ENCODE measurements at regions of chr12 and their contacts with region 1.

Region 1: DNA sequence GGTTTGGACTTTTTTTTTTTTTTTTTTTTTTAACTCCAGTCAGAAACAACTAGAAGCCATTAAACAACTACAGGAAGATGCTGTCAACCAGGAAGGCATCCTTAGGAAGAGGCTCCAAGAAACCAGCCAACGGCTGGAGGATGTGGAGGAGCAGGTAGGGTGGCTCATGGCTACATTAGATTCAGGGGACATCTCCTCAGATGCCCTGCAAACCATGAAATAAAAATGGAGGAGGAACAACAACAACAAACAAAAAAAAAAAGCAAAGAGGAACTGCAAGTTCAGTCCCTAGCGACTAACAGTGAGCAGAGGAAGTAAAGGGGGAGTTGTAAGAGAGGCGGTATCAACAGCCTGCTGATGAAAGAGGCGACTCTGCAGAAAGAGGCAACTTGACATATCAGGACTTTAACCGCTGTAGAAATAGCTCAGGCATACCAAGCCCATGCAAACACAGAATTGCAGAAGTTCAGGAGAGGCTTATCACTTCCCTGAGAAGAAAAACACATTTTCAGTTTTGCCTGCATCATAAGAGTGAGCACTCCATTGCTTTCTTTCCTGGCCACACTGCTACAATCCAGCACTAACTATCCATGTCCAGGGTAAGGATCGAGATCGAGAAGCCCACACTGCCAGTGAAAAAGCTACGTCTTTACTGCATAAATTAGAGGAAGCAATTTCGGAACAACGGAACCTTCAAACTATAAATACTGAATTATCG is 103.5 kb upstream of the BCAT1 start:
- DNase-seq: peak; percentile 82 to 91 (median 88)
- H3K4me3 ChIP-seq: peak overlapping the region; percentile 72 to 88
- H3K4me3 Mint-ChIP-seq: peak overlapping the region; percentile 93 to 100 (median 96)
- H3K27ac ChIP-seq: peak overlapping the region; percentile 52
- H3K27ac Mint-ChIP-seq: peak overlapping the region; percentile 97 to 99 (median 98)
- H3K4me1 ChIP-seq: peaks cover 51% of the 10 kb centered on the region
- H3K4me1 Mint-ChIP-seq: peaks cover 33 to 56% (median 44%) of the 10 kb centered on the region in 4 donors
- H3K27me3 ChIP-seq: no peaks in the 10 kb centered on the region
- H3K27me3 Mint-ChIP-seq: no peaks in the 10 kb centered on the region

Region 2: GRCh38 chr12:24948757-24949722 is 103.3 kb before region 1 on chr12 and contains the start of gene BCAT1:
- CTCF ChIA-PET with region 1: no interaction called
- POLR2A ChIA-PET with region 1: no interaction called
- intact Hi-C with region 1: no loop called
- DNase-seq: peak in 2 of 5 donors; percentile 2 to 11
- H3K4me3 ChIP-seq: peak within 1 kb of the TSS; percentile 55 to 64
- H3K4me3 Mint-ChIP-seq: peak within 1 kb of the TSS; percentile 82 to 92 (median 86)
- H3K27ac ChIP-seq: no peak within 1 kb of the TSS
- H3K27ac Mint-ChIP-seq: peak within 1 kb of the TSS in 3 of 7 donors; percentile 11 to 62 (median 21)
- H3K4me1 ChIP-seq: peaks cover 18% of the 10 kb centered on the region
- H3K4me1 Mint-ChIP-seq: peaks cover 19 to 25% (median 23%) of the 10 kb centered on the region in 4 donors
- H3K27me3 ChIP-seq: peaks cover 5% of the 10 kb centered on the region
- H3K27me3 Mint-ChIP-seq: peaks cover 27 to 42% of the 10 kb centered on the region in 2 donors
- total RNA-seq, gene BCAT1: 1.3 to 2.5 TPM

Region 3: GRCh38 chr12:24997970-24998582 is 54.3 kb before region 1 on chr12:
- CTCF ChIA-PET with region 1: interaction called, 21 read pairs
- POLR2A ChIA-PET with region 1: interaction called, 14 read pairs
- intact Hi-C with region 1: loop called (anchors 2 kb)
- DNase-seq: peak in 1 of 5 donors; percentile 2
- H3K4me3 ChIP-seq: no peak overlapping the region
- H3K4me3 Mint-ChIP-seq: peak overlapping the region in 1 of 8 donors; percentile 6
- H3K27ac ChIP-seq: no peak overlapping the region
- H3K27ac Mint-ChIP-seq: peak overlapping the region in 1 of 7 donors; percentile 52
- H3K4me1 ChIP-seq: peaks cover 12% of the 10 kb centered on the region
- H3K4me1 Mint-ChIP-seq: peaks cover 8 to 14% (median 10%) of the 10 kb centered on the region in 4 donors
- H3K27me3 ChIP-seq: no peaks in the 10 kb centered on the region
- H3K27me3 Mint-ChIP-seq: no peaks in the 10 kb centered on the region

Region 4: DNA sequence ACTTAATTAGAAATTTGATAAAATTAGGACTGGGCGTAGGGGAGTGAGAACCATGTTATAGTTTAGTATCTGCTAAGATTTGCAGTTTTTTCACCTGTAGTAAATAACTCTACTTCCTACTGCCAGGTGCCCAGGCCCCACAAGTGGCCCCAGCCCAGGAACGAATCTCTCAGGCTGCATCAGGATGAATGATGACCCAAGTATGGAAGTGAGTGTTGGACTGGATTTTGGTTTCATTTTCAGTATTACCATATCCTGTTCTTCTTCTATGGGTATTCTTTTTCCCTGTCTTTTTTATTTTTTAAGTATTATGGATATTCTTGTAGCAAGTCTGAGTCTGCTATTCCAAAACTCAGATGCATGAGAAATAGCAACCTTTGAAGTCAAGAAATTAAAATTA is 16.9 kb after region 1 on chr12:
- CTCF ChIA-PET with region 1: interaction called, 3 read pairs
- POLR2A ChIA-PET with region 1: interaction called, 6 read pairs
- intact Hi-C with region 1: loop called (anchors 2 kb)
- DNase-seq: no peak
- H3K4me3 ChIP-seq: no peak overlapping the region
- H3K4me3 Mint-ChIP-seq: peak overlapping the region in 1 of 8 donors; percentile 7
- H3K27ac ChIP-seq: no peak overlapping the region
- H3K27ac Mint-ChIP-seq: peak overlapping the region in 3 of 7 donors; percentile 27 to 55 (median 41)
- H3K4me1 ChIP-seq: peaks cover 5% of the 10 kb centered on the region
- H3K4me1 Mint-ChIP-seq: peaks cover 14 to 39% (median 18%) of the 10 kb centered on the region in 4 donors
- H3K27me3 ChIP-seq: no peaks in the 10 kb centered on the region
- H3K27me3 Mint-ChIP-seq: no peaks in the 10 kb centered on the region

Region 5: GRCh38 chr12:25130741-25131188 is 78.4 kb after region 1 on chr12:
- CTCF ChIA-PET with region 1: interaction called, 6 read pairs
- POLR2A ChIA-PET with region 1: no interaction called
- intact Hi-C with region 1: loop called (anchors 1 kb)
- DNase-seq: peak in 4 of 5 donors; percentile 33 to 53 (median 46)
- H3K4me3 ChIP-seq: no peak overlapping the region
- H3K4me3 Mint-ChIP-seq: no peak overlapping the region
- H3K27ac ChIP-seq: no peak overlapping the region
- H3K27ac Mint-ChIP-seq: no peak overlapping the region
- H3K4me1 ChIP-seq: no peaks in the 10 kb centered on the region
- H3K4me1 Mint-ChIP-seq: no peaks in the 10 kb centered on the region
- H3K27me3 ChIP-seq: no peaks in the 10 kb centered on the region
- H3K27me3 Mint-ChIP-seq: peaks cover 2 to 3% of the 10 kb centered on the region in 2 donors

Region 6: DNA sequence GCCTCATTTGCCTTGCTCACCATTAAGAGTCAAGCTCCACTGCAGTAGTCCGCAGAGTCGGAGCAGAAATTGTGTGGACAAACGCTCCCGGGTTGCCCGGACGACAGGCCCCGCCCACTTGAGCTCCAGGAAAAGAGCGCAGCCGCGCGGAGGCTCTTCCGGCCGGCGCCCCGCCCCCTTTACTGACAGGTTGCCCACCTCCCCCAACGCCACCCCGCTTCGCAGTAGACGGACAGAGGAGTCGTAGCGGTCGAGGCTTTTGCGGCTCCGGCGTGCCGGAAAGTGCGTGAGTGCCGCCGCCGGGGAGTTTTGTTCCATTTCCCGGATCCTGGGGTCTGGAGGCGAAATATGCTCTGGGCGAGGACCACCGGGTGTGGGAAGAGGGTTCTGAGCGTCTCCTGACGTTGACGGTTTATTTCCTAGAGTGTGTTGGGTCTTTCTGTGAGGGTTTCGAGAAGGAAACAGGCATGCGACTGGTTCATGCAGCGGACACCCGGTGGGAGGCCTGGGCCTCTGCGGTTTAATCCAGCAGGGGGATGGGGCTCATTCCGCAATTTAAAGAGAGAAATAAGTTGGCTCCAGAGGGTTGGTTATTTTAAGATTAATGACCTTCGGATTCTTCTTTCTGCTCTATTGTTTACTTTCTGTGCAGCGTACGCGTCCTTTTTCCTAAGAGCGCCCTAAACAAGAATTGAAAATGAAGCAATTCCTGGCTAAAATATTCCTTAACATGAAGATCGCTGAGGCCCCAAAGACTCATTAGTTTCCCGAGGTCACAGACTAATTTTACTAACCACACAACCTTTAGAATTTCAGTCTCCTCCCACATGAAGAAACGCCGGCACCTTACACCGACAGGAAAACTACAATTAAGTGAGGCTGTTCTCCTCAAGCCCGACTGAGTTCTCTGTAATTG is 143.0 kb after region 1 on chr12 and contains the starts of genes DNAI7 and ETFRF1:
- CTCF ChIA-PET with region 1: no interaction called
- POLR2A ChIA-PET with region 1: interaction called, 9 read pairs
- intact Hi-C with region 1: loop called (anchors 1 kb)
- DNase-seq: peak; percentile 93 to 97 (median 95)
- H3K4me3 ChIP-seq: peak within 1 kb of the TSS; percentile 73 to 98
- H3K4me3 Mint-ChIP-seq: peak within 1 kb of the TSS; percentile 96 to 99 (median 99)
- H3K27ac ChIP-seq: peak within 1 kb of the TSS; percentile 83
- H3K27ac Mint-ChIP-seq: peak within 1 kb of the TSS; percentile 97 to 100 (median 99)
- H3K4me1 ChIP-seq: peaks cover 24% of the 10 kb centered on the region
- H3K4me1 Mint-ChIP-seq: peaks cover 16 to 35% (median 25%) of the 10 kb centered on the region in 4 donors
- H3K27me3 ChIP-seq: no peaks in the 10 kb centered on the region
- H3K27me3 Mint-ChIP-seq: no peaks in the 10 kb centered on the region
- total RNA-seq, gene DNAI7: 0.15 TPM in 1 of 2 experiments, not detected in the other
- total RNA-seq, gene ETFRF1: 22.1 to 23.0 TPM

Region 7: DNA sequence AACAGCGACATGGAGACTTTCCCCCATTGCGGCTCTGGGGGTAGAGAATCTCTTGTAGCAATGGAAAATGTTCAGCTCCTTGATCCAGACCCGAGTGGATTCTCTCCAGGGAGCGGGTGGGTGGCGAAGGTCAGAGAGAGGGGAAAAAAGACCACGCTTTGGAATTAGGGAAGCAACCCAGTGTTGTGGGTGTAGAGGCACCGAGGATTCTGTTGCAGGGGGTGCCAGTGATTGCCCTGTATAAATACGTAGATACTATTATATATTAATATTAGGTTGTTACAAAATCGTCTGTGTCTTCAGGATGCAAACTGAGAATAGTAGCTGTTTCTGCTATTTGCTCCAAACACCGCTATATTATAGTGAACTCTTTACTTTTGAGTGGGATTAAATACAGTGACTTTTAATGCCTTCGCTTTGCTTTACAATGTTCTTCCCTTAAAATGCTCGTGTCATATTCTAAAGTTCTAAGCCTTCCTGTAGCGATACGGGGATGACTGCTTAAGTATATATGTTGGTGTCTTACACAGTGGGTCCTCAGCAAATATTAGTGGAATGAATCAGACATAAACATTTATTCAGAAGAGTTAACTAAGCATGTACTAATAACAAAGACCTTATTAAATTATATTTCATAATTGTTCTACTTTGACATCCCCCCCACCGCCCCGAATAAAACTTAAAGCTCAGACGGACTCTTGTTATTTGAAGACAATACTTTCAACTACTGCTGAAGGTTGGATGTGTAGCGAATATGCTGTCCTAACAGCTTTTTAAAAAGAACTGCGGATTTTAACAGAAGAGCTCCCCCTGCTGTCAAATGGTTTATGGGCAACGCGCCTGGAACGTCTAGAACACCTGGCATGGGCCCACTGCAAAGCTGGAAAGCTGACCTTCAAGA is 334.7 kb after region 1 on chr12:
- CTCF ChIA-PET with region 1: interaction called, 6 read pairs
- POLR2A ChIA-PET with region 1: no interaction called
- intact Hi-C with region 1: loop called (anchors 1 kb)
- DNase-seq: peak; percentile 78 to 86 (median 83)
- H3K4me3 ChIP-seq: peak overlapping the region; percentile 62 to 92
- H3K4me3 Mint-ChIP-seq: peak overlapping the region; percentile 94 to 100 (median 98)
- H3K27ac ChIP-seq: peak overlapping the region; percentile 98
- H3K27ac Mint-ChIP-seq: peak overlapping the region; percentile 99 to 100 (median 100)
- H3K4me1 ChIP-seq: peaks cover 40% of the 10 kb centered on the region
- H3K4me1 Mint-ChIP-seq: peaks cover 27 to 63% (median 42%) of the 10 kb centered on the region in 4 donors
- H3K27me3 ChIP-seq: no peaks in the 10 kb centered on the region
- H3K27me3 Mint-ChIP-seq: peaks cover 0 to 2% of the 10 kb centered on the region in 2 donors

Measured in CD4-positive, alpha-beta memory T cell (primary cell).